CD14-positive monocyte (primary cell): ENCODE measurements at regions of chr11 and their contacts with region 1.

Region 1: GRCh38 chr11:64225612-64226506 is at the starts of genes NUDT22 and TRPT1:
- DNase-seq: peak; percentile 80 to 86 (median 81)
- H3K4me3 ChIP-seq: peak within 1 kb of the TSS; percentile 65 to 97 (median 96)
- H3K4me3 Mint-ChIP-seq: peak within 1 kb of the TSS; percentile 81 to 89
- H3K27ac ChIP-seq: peak within 1 kb of the TSS; percentile 78 to 92
- H3K27ac Mint-ChIP-seq: peak within 1 kb of the TSS; percentile 77 to 95 (median 88)
- H3K4me1 ChIP-seq: peaks cover 40 to 58% of the 10 kb centered on the region in 2 donors
- H3K4me1 Mint-ChIP-seq: peaks cover 42% of the 10 kb centered on the region
- H3K27me3 ChIP-seq: no peaks in the 10 kb centered on the region
- H3K27me3 Mint-ChIP-seq: peaks cover 0 to 1% (median 0%) of the 10 kb centered on the region in 3 donors
- CTCF ChIP-seq: peak; percentile 31
- polyA plus RNA-seq, gene NUDT22: 47.9 to 86.1 (median 56.1) TPM
- polyA plus RNA-seq, gene TRPT1: 24.8 to 34.6 (median 31.6) TPM

Region 2: GRCh38 chr11:64240394-64241174 is 14.7 kb after region 1 on chr11 and contains the start of gene FKBP2:
- intact Hi-C with region 1: loop called in 1 of 2 experiments (anchors 2 kb)
- DNase-seq: peak; percentile 98 to 99 (median 99)
- H3K4me3 ChIP-seq: peak within 1 kb of the TSS; percentile 54 to 84 (median 81)
- H3K4me3 Mint-ChIP-seq: peak within 1 kb of the TSS; percentile 87 to 92
- H3K27ac ChIP-seq: peak within 1 kb of the TSS; percentile 96 to 100
- H3K27ac Mint-ChIP-seq: peak within 1 kb of the TSS; percentile 100
- H3K4me1 ChIP-seq: peaks cover 61 to 75% of the 10 kb centered on the region in 2 donors
- H3K4me1 Mint-ChIP-seq: peaks cover 57% of the 10 kb centered on the region
- H3K27me3 ChIP-seq: no peaks in the 10 kb centered on the region
- H3K27me3 Mint-ChIP-seq: peaks cover 0 to 6% (median under 1%) of the 10 kb centered on the region in 3 donors
- CTCF ChIP-seq: no peak
- polyA plus RNA-seq, gene FKBP2: 38.9 to 80.7 (median 71.1) TPM